ENCODE measurements at regions of chr15 and their contacts with region 1.

Region 1: DNA sequence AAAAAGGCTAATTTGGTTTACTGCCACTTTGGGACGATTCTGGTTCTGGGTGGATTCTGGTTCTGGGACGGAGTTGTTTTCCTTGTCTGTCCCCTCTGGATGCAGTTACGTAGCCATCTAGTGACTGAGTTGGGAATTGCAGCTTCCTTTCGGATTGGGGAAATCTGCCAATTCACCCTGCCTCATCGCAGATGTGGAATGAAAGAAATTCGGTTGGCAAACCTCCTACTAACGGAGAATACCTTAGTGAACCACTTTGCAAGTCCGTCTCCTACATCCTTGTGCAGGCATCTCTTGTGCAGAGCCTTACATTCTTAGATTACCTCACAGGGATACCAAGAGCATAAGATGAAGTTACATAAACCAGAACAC is 31.5 kb upstream of the AP4E1 start:
- DNase-seq: no peak
- ATAC-seq: peak; percentile 92
- H3K4me3 ChIP-seq: peak overlapping the region; percentile 45
- H3K27ac ChIP-seq: no peak overlapping the region
- H3K4me1 ChIP-seq: no peaks in the 10 kb centered on the region
- H3K27me3 ChIP-seq: no peaks in the 10 kb centered on the region
- CTCF ChIP-seq: peak; percentile 98

Region 2: DNA sequence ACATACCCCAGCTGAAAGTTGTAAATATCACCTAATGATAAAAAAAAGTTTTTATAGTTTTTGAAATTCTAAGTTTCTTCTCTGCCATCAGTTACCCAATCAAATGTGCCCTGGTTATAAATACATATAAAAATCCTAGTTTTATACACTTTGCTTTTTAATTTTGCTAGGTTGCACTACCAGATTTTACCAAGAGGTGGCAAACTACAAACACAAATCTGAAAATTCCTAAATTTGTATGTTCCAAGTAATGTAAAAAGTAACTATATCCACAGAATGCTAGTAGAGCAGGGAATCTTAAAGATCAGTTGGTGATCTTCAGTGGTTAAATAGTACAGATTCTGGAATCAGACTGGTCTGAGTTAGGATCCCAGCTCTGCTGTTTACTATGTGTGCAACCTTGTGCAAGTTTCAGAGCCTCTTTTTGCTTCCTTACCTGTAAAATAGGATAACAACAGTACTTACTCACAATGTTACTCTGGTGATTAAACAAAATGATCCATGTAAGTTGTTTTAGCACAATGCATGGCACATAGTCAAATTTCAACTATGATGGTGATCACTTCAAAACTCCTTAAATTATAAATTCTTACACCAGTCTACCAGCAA is 201.3 kb before region 1 on chr15:
- intact Hi-C with region 1: loop called (anchors 10 kb)
- DNase-seq: no peak
- ATAC-seq: no peak
- H3K4me3 ChIP-seq: no peak overlapping the region
- H3K27ac ChIP-seq: no peak overlapping the region
- H3K4me1 ChIP-seq: no peaks in the 10 kb centered on the region
- H3K27me3 ChIP-seq: no peaks in the 10 kb centered on the region
- CTCF ChIP-seq: peak; percentile 78